Calu3 (cell line): ENCODE measurements at regions of chr7 and their contacts with region 1.

Region 1: GRCh38 chr7:29113384-29114103 is 32.8 kb downstream of the CPVL start:
- DNase-seq: peak; percentile 72
- H3K4me3 Mint-ChIP-seq: peak overlapping the region; percentile 60
- H3K27ac Mint-ChIP-seq: peak overlapping the region; percentile 72
- H3K4me1 Mint-ChIP-seq: peaks cover 59% of the 10 kb centered on the region
- H3K27me3 Mint-ChIP-seq: no peaks in the 10 kb centered on the region
- CTCF ChIP-seq: peak; percentile 50

Region 2: GRCh38 chr7:28955718-28956619 is 157.6 kb before region 1 on chr7:
- CTCF ChIA-PET with region 1: interaction called, 24 read pairs
- intact Hi-C with region 1: no loop called
- DNase-seq: peak; percentile 93
- H3K4me3 Mint-ChIP-seq: peak overlapping the region; percentile 93
- H3K27ac Mint-ChIP-seq: peak overlapping the region; percentile 35
- H3K4me1 Mint-ChIP-seq: peaks cover 14% of the 10 kb centered on the region
- H3K27me3 Mint-ChIP-seq: no peaks in the 10 kb centered on the region
- CTCF ChIP-seq: peak; percentile 91

Region 3: DNA sequence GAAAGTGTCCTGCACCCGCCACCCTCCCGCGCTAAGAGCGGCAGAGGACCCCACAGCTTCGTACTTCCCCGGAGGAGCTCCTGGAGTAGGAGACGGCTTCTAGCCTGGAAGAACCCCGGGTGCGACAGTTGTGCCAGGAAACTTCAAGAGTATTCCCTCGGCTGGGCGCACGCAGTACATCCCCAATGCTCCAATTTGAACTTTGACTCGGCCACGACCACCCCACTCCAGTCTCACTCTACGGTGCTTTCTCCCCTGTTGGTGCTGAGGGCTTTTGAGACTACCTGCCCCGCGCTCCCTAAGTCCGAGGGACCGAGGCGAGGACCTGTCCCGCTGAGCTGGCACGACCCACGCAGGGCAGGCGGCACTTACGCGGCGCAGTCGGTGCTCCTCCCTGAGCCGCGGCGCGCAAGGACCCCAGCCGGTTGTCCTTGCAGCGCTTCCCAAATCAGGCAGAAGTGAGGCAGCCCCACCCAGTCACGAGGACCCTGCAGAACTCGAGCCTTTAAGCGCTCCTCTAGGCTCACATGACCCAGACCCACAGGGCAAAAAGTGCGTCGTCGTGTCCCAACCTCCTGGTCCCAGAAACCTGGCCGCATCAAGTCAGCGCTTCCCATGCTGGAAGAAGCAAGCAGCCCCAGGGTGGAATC is 32.6 kb after region 1 on chr7 and contains the start of gene CPVL:
- CTCF ChIA-PET with region 1: interaction called, 11 read pairs
- intact Hi-C with region 1: loop called (anchors 2 kb)
- DNase-seq: peak; percentile 76
- H3K4me3 Mint-ChIP-seq: peak within 1 kb of the TSS; percentile 99
- H3K27ac Mint-ChIP-seq: peak within 1 kb of the TSS; percentile 72
- H3K4me1 Mint-ChIP-seq: peaks cover 35% of the 10 kb centered on the region
- H3K27me3 Mint-ChIP-seq: no peaks in the 10 kb centered on the region
- CTCF ChIP-seq: no peak
- total RNA-seq, gene CPVL: 43.5 and 62.7 TPM in 2 replicates

Region 4: DNA sequence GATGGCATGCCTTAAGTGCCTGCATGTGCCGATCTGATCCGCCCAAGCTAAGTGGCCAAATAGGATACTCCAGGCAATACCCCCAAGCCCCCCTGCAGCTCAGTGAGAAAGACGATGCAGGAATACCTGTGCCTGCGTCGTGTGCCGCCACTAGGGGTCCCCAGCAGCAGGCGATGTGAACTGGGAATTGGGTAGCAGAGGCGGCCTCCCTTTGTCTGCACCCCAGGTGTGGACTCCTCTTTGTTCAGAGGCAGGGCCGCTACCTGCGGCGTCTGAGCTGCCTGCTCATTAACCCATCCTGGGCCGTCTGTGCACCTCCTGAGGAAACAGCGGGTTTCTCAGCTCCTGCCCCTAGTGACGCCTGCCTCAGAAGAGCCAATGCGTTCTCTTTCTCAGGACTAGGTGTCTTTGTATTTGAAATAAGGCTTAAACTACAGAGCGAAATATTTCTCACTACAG is 76.2 kb after region 1 on chr7:
- CTCF ChIA-PET with region 1: interaction called, 19 read pairs
- intact Hi-C with region 1: loop called (anchors 1 kb)
- DNase-seq: peak; percentile 86
- H3K4me3 Mint-ChIP-seq: no peak overlapping the region
- H3K27ac Mint-ChIP-seq: no peak overlapping the region
- H3K4me1 Mint-ChIP-seq: peaks cover 18% of the 10 kb centered on the region
- H3K27me3 Mint-ChIP-seq: peaks cover 14% of the 10 kb centered on the region
- CTCF ChIP-seq: peak; percentile 97

Region 5: GRCh38 chr7:29345600-29345999 is 232.1 kb after region 1 on chr7:
- CTCF ChIA-PET with region 1: interaction called, 37 read pairs
- intact Hi-C with region 1: loop called (anchors 1 kb)
- DNase-seq: peak; percentile 81
- H3K4me3 Mint-ChIP-seq: no peak overlapping the region
- H3K27ac Mint-ChIP-seq: no peak overlapping the region
- H3K4me1 Mint-ChIP-seq: no peaks in the 10 kb centered on the region
- H3K27me3 Mint-ChIP-seq: no peaks in the 10 kb centered on the region
- CTCF ChIP-seq: no peak

Region 6: GRCh38 chr7:29408841-29409243 is 295.3 kb after region 1 on chr7:
- CTCF ChIA-PET with region 1: interaction called, 22 read pairs
- intact Hi-C with region 1: loop called (anchors 2 kb)
- DNase-seq: peak; percentile 79
- H3K4me3 Mint-ChIP-seq: no peak overlapping the region
- H3K27ac Mint-ChIP-seq: no peak overlapping the region
- H3K4me1 Mint-ChIP-seq: peaks cover 13% of the 10 kb centered on the region
- H3K27me3 Mint-ChIP-seq: no peaks in the 10 kb centered on the region
- CTCF ChIP-seq: peak; percentile 89